Mammary epithelial cell (primary cell): ENCODE measurements at regions of chr5 and their contacts with region 1.

Region 1: DNA sequence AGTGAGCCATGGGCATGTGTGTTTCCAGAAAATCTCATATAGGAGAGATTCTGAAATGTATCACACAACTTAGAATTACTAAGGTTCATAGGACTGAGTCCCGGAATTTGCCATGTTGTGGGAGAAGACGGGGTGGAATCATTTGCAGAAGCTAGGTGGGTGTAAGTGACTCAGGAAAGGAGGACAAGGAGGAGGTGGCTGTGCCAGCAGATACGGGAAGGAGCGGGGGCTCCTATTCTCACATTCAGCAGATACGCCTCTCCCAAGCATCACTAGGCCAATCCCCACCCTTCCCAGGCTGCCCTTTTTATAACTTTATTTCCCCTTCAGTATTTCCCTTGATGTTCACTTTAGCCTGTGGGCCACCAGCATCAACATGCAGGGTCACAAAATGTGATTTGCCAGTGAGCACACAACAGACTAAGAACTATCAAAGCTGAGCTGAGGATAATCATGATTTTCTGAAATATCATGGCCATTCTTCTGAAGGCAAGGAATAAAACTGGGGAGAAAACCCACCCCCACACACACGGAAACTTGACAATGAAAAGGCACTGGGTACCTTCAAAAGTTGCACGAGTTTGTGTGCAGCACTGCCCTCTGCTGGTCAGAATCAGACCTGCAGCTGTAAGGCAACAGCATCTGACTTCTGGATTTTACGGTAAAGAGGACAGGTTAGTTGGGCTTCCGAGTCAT is 133.2 kb downstream of the MTX3 start:
- DNase-seq: peak; percentile 45
- H3K4me3 ChIP-seq: no peak overlapping the region
- H3K27ac ChIP-seq: no peak overlapping the region
- H3K4me1 ChIP-seq: peaks cover 7% of the 10 kb centered on the region
- H3K27me3 ChIP-seq: peaks cover 3% of the 10 kb centered on the region
- CTCF ChIP-seq: peak; percentile 93 to 97

Region 2: GRCh38 chr5:79547972-79548371 is 309.9 kb before region 1 on chr5:
- CTCF ChIA-PET with region 1: no interaction called
- dilution Hi-C with region 1: no loop called
- in situ Hi-C with region 1: no loop called
- intact Hi-C with region 1: loop called (anchors 2 kb)
- DNase-seq: peak; percentile 74
- H3K4me3 ChIP-seq: no peak overlapping the region
- H3K27ac ChIP-seq: no peak overlapping the region
- H3K4me1 ChIP-seq: peaks cover 13% of the 10 kb centered on the region
- H3K27me3 ChIP-seq: no peaks in the 10 kb centered on the region
- CTCF ChIP-seq: no peak

Region 3: DNA sequence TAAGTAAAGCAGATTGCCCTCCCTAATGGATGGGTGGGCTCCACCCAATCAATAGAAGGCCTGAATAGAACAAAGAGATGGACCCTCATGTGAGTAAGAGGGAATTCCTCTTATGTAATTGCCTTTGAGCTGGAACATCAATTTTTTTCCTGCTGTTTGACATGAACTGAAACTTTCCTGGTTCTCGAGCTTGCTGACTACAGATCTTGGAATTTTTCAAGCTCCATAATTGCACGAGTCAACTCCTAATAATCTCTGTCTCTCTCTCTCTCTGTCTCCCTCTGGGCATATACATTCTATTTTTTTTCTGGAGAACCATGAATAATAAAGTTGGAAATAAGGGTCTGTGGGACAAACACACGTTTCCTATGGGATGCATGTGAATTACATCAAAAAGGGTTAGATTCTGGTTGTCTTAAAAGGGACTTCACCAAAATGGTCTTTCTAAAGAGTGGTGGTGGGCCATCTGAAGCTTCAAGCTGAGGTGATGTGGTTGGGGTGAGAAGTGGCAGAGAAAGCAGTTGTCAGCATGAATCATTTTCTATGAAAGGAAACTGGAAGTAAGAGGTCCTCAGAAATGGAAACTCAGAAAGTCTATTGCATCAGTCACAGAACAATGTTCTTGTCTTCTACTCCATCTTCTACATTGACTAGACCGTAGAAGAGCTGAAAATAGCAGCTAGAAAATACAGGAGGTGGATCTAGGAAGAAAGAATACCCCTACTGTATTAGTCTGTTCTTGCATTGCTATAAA is 296.9 kb before region 1 on chr5:
- CTCF ChIA-PET with region 1: no interaction called
- dilution Hi-C with region 1: no loop called
- in situ Hi-C with region 1: loop called (anchors 10 kb)
- intact Hi-C with region 1: no loop called
- DNase-seq: peak; percentile 40
- H3K4me3 ChIP-seq: no peak overlapping the region
- H3K27ac ChIP-seq: no peak overlapping the region
- H3K4me1 ChIP-seq: peaks cover 8% of the 10 kb centered on the region
- H3K27me3 ChIP-seq: no peaks in the 10 kb centered on the region
- CTCF ChIP-seq: no peak

Region 4: DNA sequence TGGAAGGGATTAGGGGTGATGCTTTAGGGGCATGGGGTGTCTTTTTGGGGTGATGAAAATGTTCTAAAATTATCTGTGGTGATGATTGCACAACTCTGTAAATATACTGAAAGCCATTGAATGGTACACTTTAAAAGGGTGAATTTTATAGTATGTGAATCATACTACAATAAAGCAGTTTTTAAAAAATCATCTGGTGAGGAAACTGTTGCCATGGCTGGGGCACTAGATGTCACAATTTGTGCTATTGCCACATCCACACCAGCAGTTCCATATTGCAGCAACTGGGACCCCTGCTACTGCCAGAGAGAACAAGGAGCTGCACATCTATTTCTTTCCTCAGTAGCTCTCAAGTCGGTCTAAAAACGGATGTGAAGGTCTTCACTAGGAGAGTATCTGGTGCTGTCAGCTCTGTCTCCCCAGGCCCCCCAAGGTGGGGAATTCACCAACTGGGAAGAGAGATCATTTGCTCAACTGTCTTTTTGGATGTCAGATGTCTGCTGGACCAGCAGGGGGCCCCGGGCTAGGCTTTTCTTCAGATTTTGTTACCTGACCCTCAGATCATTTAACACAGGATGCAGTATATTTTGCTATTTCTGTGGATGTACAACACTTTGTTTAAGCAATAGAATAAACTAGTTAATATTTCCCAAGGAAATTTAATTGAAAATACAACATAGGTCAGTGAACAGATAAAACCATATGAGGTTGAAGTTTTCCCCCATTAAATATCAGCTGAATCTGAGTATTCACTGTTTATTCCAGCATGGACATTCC is 155.1 kb before region 1 on chr5:
- CTCF ChIA-PET with region 1: interaction called, 3 read pairs
- dilution Hi-C with region 1: no loop called
- in situ Hi-C with region 1: no loop called
- intact Hi-C with region 1: loop called (anchors 1 kb)
- DNase-seq: peak; percentile 56
- H3K4me3 ChIP-seq: no peak overlapping the region
- H3K27ac ChIP-seq: no peak overlapping the region
- H3K4me1 ChIP-seq: peaks cover 10% of the 10 kb centered on the region
- H3K27me3 ChIP-seq: no peaks in the 10 kb centered on the region
- CTCF ChIP-seq: peak; percentile 57 to 60

Region 5: GRCh38 chr5:80318212-80318611 is 460.4 kb after region 1 on chr5:
- CTCF ChIA-PET with region 1: no interaction called
- dilution Hi-C with region 1: loop called (anchors 25 kb)
- in situ Hi-C with region 1: no loop called
- intact Hi-C with region 1: no loop called
- DNase-seq: no peak
- H3K4me3 ChIP-seq: no peak overlapping the region
- H3K27ac ChIP-seq: no peak overlapping the region
- H3K4me1 ChIP-seq: no peaks in the 10 kb centered on the region
- H3K27me3 ChIP-seq: peaks cover 5% of the 10 kb centered on the region
- CTCF ChIP-seq: no peak